ENCODE measurements at regions of chr19 and their contacts with region 1.

Region 1: GRCh38 chr19:1001538-1002166 is 1.4 kb downstream of the GRIN3B start:
- DNase-seq: peak; percentile 78
- H3K4me3 Mint-ChIP-seq: no peak overlapping the region
- H3K27ac Mint-ChIP-seq: no peak overlapping the region
- H3K4me1 Mint-ChIP-seq: peaks cover 11% of the 10 kb centered on the region
- H3K27me3 Mint-ChIP-seq: peaks cover 29% of the 10 kb centered on the region

Region 2: DNA sequence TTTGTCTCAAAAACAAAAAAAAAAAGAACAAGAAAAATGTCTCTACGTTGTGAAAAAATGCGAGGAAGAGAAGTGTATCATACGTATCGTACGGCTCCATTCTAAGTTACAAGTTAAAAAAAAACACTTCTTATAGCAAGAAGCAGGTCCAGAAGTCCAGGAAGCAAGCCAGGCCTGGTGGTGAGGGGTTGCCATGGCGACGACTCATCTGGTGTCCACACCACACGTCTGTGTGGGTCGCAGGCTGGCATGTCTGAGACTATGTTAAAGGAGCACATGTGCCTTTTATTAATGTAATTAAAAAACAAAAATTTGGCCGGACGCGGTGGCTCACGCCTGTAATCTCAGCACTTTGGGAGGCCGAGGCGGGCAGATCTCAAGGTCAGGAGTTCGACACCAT is 114.6 kb before region 1 on chr19:
- CTCF ChIA-PET with region 1: no interaction called
- POLR2A ChIA-PET with region 1: no interaction called
- intact Hi-C with region 1: no loop called
- DNase-seq: no peak
- H3K4me3 Mint-ChIP-seq: no peak overlapping the region
- H3K27ac Mint-ChIP-seq: no peak overlapping the region
- H3K4me1 Mint-ChIP-seq: peaks cover 3% of the 10 kb centered on the region
- H3K27me3 Mint-ChIP-seq: no peaks in the 10 kb centered on the region

Region 3: GRCh38 chr19:925526-926322 is 75.9 kb before region 1 on chr19 and contains the start of gene ARID3A:
- CTCF ChIA-PET with region 1: no interaction called
- POLR2A ChIA-PET with region 1: interaction called, 3 read pairs
- intact Hi-C with region 1: loop called (anchors 1 kb)
- DNase-seq: peak; percentile 80
- H3K4me3 Mint-ChIP-seq: peak within 1 kb of the TSS; percentile 75
- H3K27ac Mint-ChIP-seq: peak within 1 kb of the TSS; percentile 71
- H3K4me1 Mint-ChIP-seq: peaks cover 12% of the 10 kb centered on the region
- H3K27me3 Mint-ChIP-seq: no peaks in the 10 kb centered on the region
- total RNA-seq, gene ARID3A: 28.5 to 30.6 TPM